Left cardiac atrium (tissue), 4 donors: ENCODE measurements at regions of chr2 and their contacts with region 1.

Region 1: GRCh38 chr2:172102391-172103278 is at the start of gene DLX2:
- DNase-seq: peak; percentile 80
- ATAC-seq: peak; percentile 71 to 72
- total RNA-seq, gene DLX2: not detected

Region 2: GRCh38 chr2:171598713-171599319 is 503.8 kb before region 1 on chr2:
- intact Hi-C with region 1: loop called in 1 of 2 experiments (anchors 10 kb)
- DNase-seq: peak; percentile 22
- ATAC-seq: peak; percentile 50 to 83

Region 3: DNA sequence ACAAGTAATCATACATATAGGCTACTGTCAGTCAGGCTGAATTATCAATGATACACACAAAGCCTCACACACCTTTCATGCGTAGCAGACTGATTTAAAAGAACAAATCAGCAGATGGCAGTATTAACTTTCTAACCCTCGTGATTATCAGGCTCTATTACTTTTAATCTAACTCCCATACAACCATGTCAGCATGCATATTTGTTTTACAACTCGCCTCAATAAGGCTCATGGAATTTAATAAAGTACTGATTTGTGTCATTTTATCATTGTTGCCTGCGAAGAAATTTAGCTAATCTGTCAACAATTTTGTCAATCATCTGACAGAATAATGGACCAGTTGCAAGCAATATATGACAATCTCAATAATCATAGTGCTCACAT is 291.4 kb before region 1 on chr2:
- intact Hi-C with region 1: loop called in 1 of 2 experiments (anchors 10 kb)
- DNase-seq: no peak
- ATAC-seq: peak; percentile 34 to 42

Region 4: GRCh38 chr2:172200495-172201085 is 98.0 kb after region 1 on chr2:
- intact Hi-C with region 1: no loop called
- DNase-seq: no peak
- ATAC-seq: no peak